SK-N-SH (cell line): ENCODE measurements at regions of chr17 and their contacts with region 1.

Region 1: DNA sequence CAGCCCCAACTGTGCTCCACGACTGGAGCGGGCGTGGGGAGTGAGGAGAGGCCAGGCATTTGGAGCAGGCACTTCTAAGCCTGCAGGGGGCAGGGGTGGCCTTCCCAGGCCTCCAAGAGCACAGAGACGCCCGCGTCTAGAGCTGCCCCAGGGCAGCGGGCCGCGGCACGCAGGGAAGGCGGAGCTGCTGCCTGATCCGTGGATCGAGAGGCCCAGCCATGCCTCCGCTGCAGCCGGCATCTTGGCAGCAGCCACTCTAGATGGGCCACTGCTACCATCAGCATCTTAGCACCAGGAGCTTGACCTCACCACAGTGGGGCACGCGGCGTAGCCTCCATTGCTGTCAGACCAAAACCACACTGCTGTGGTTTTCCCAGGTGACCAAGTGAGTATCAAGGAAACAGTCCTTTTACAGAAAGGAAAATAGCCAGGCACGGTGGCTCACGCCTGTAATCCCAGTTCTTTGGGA is 20.4 kb upstream of the WDR45B start:
- DNase-seq: peak; percentile 84
- H3K4me3 ChIP-seq: no peak overlapping the region
- H3K27ac ChIP-seq: no peak overlapping the region
- H3K4me1 ChIP-seq: peaks cover 0 to 2% of the 10 kb centered on the region in 2 experiments; a peak in 1 of 4 replicates
- H3K27me3 ChIP-seq: no peaks in the 10 kb centered on the region
- CTCF ChIP-seq: peak; percentile 48
- EP300 ChIP-seq: no peak
- RAD21 ChIP-seq: peak; percentile 66

Region 2: GRCh38 chr17:82603981-82604448 is 64.7 kb before region 1 on chr17:
- CTCF ChIA-PET with region 1: no interaction called
- POLR2A ChIA-PET with region 1: no interaction called
- DNase-seq: peak; percentile 37
- H3K4me3 ChIP-seq: no peak overlapping the region
- H3K27ac ChIP-seq: no peak overlapping the region
- H3K4me1 ChIP-seq: no peaks in the 10 kb centered on the region; a peak in 1 of 4 replicates
- H3K27me3 ChIP-seq: no peaks in the 10 kb centered on the region
- CTCF ChIP-seq: no peak
- EP300 ChIP-seq: no peak
- RAD21 ChIP-seq: no peak

Region 3: GRCh38 chr17:82679586-82680465 is 11.2 kb after region 1 on chr17:
- CTCF ChIA-PET with region 1: interaction called, 18 read pairs
- POLR2A ChIA-PET with region 1: no interaction called
- DNase-seq: no peak
- H3K4me3 ChIP-seq: no peak overlapping the region
- H3K27ac ChIP-seq: no peak overlapping the region
- H3K4me1 ChIP-seq: no peaks in the 10 kb centered on the region
- H3K27me3 ChIP-seq: no peaks in the 10 kb centered on the region
- CTCF ChIP-seq: no peak
- EP300 ChIP-seq: no peak
- RAD21 ChIP-seq: no peak

Region 4: GRCh38 chr17:82767041-82767754 is 98.5 kb after region 1 on chr17:
- CTCF ChIA-PET with region 1: interaction called, 12 read pairs
- POLR2A ChIA-PET with region 1: no interaction called
- DNase-seq: peak; percentile 76
- H3K4me3 ChIP-seq: no peak overlapping the region
- H3K27ac ChIP-seq: no peak overlapping the region
- H3K4me1 ChIP-seq: no peaks in the 10 kb centered on the region
- H3K27me3 ChIP-seq: no peaks in the 10 kb centered on the region
- CTCF ChIP-seq: peak; percentile 85
- EP300 ChIP-seq: no peak
- RAD21 ChIP-seq: peak; percentile 71

Region 5: DNA sequence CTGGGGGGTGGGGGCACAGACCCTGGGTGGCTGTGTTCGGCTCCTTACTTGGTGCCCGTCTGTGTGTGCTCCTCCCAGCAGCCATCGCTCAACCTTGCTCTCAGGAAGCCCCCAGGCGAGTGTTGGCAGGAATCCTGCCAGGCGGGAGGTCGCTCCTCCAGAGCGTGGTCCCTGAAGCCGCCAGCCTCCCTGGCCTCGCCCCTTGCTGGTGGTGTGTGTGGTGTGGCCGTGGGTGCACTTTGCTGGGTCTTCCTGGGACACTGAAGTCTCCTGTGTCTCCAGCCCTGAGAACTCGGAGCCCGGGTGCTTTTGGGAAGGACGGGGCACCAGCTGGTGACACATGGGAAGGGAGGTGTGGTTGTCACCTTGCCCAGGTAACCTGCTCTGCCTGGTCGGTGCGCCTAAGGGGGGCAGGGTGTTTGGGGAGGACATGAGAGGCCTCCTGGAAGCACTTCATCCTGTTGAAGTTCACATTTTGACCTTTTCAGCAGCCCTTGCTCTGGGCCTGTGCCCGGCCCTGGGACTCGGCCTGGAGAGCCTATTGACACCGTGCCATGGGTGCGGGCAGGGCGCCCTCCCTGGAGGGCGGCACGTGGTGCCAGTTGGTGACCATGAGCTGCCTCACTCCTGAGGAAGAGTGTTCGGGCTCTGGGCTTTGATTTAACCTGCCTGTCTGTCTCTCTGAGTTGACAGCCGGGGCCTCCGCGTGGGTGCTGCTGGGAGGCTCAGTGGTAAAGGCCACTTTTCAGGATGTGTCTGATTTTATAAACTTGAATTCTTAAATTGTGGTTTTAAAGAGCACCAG is 220.2 kb after region 1 on chr17:
- CTCF ChIA-PET with region 1: no interaction called
- POLR2A ChIA-PET with region 1: no interaction called
- DNase-seq: peak; percentile 69
- H3K4me3 ChIP-seq: no peak overlapping the region
- H3K27ac ChIP-seq: no peak overlapping the region; a peak in 1 of 4 replicates
- H3K4me1 ChIP-seq: peaks cover 11 to 42% of the 10 kb centered on the region in 2 experiments
- H3K27me3 ChIP-seq: no peaks in the 10 kb centered on the region
- CTCF ChIP-seq: no peak
- EP300 ChIP-seq: no peak
- RAD21 ChIP-seq: no peak